Activated naive CD4-positive, alpha-beta T cell treated with anti-CD3 and anti-CD28 coated beads for 36 hours (primary cell): ENCODE measurements at regions of chr9 and their contacts with region 1.

Region 1: DNA sequence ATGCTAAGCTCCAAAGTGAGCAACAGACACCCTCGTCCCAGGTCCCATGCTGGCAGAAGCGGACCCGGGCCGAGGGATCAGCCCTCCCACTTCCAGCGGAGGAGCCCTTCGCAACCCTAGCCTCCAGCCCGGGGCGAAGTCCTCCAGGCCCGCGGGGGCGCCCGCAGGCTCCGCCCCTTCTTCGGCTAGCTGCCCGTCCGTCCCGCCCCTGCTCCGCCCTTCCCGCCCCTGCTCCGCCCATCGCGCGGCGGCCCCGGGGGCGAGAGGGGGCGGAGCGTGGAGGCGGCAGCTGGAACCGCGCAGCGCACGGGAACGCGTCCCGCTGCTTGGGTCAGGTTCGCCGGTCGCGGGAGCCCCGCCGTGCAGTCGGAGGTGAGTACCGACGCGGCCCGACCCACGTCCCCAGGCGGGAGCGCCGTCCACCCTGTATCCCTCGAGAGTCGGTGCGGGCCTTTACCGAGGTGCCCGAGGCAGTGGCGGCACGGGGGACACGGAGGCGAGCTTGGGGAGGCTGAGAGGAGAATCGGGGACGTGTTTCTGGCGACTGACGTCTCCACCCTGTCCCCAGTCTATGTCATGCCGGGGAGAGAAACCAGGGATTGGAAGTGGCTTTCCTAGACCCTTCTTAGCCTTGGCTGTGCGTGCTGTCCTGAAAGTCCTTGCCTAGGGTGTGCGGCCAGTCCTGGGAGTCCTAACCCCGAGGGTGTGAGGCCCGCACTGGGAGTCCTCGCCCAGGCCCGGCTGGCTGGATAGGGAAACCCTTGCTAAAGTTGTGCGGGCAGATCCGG is at the start of gene ACO1:
- DNase-seq: peak; percentile 82
- H3K4me3 Mint-ChIP-seq: peak within 1 kb of the TSS; percentile 79
- H3K27ac Mint-ChIP-seq: no peak within 1 kb of the TSS
- H3K4me1 Mint-ChIP-seq: peaks cover 16% of the 10 kb centered on the region
- H3K27me3 Mint-ChIP-seq: peaks cover 3% of the 10 kb centered on the region
- total RNA-seq, gene ACO1: 13.2 to 14.8 TPM

Region 2: DNA sequence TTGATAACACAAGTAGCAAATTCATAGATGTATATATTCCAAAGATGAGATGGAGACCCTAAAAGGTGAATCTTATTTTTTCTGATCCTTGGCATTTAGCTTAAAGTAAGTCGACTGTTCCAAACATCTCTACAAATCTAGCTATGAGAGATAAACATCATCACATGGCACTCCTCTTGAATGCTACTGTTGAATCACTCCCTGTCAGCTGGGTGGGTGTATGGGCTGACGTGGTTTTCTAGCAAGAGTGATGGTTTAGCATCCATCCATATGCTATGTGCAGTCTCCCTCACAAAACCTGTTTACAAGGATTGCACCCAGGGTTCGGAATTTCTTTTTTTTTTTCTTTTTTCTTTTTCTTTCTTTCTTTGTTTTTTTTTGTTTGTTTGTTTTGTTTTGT is 13.6 kb after region 1 on chr9:
- CTCF ChIA-PET with region 1: interaction called, 10 read pairs
- intact Hi-C with region 1: loop called (anchors 2 kb)
- DNase-seq: no peak
- H3K4me3 Mint-ChIP-seq: no peak overlapping the region
- H3K27ac Mint-ChIP-seq: no peak overlapping the region
- H3K4me1 Mint-ChIP-seq: no peaks in the 10 kb centered on the region
- H3K27me3 Mint-ChIP-seq: no peaks in the 10 kb centered on the region

Region 3: DNA sequence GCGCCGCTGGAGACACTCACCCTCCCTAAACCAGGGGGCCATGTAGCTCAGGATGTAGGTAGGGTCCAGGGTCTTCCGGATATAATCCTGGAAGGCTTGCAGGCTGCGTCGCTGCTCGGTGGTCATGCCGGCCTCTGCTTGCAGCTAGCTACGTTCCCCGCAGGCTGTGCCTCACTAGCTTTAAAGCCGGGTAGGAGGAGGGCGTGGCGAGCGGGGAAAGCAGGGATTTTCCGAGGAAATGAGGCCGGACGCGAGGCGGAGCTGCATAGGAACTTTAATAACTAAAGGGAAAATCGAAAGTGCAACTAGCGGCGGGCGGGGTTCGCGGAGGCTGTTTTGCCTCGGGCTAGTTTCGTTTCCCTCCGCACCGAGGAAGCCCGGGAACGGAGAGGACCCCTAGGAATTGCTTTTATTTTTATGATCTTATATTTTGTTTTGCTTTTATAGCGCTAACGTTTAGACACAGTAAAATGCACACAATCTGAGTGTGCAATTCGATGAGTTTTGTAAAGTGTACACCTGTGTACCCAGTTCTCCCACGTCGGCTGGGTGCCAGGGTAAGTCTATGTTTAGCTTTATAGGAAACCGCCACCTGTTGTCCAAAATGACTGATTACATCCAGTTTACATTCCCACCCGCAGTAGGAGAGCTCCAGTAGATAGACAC is 141.6 kb after region 1 on chr9 and contains the start of gene RIGI:
- CTCF ChIA-PET with region 1: interaction called, 33 read pairs
- intact Hi-C with region 1: loop called (anchors 1 kb)
- DNase-seq: peak; percentile 90
- H3K4me3 Mint-ChIP-seq: peak within 1 kb of the TSS; percentile 77
- H3K27ac Mint-ChIP-seq: peak within 1 kb of the TSS; percentile 84
- H3K4me1 Mint-ChIP-seq: peaks cover 32% of the 10 kb centered on the region
- H3K27me3 Mint-ChIP-seq: no peaks in the 10 kb centered on the region
- total RNA-seq, gene RIGI: 7.5 to 8.4 TPM

Region 4: GRCh38 chr9:32571969-32572899 is 187.7 kb after region 1 on chr9:
- CTCF ChIA-PET with region 1: interaction called, 322 read pairs
- intact Hi-C with region 1: loop called (anchors 1 kb)
- DNase-seq: peak; percentile 88
- H3K4me3 Mint-ChIP-seq: peak overlapping the region; percentile 88
- H3K27ac Mint-ChIP-seq: peak overlapping the region; percentile 92
- H3K4me1 Mint-ChIP-seq: peaks cover 16% of the 10 kb centered on the region
- H3K27me3 Mint-ChIP-seq: no peaks in the 10 kb centered on the region

Region 5: DNA sequence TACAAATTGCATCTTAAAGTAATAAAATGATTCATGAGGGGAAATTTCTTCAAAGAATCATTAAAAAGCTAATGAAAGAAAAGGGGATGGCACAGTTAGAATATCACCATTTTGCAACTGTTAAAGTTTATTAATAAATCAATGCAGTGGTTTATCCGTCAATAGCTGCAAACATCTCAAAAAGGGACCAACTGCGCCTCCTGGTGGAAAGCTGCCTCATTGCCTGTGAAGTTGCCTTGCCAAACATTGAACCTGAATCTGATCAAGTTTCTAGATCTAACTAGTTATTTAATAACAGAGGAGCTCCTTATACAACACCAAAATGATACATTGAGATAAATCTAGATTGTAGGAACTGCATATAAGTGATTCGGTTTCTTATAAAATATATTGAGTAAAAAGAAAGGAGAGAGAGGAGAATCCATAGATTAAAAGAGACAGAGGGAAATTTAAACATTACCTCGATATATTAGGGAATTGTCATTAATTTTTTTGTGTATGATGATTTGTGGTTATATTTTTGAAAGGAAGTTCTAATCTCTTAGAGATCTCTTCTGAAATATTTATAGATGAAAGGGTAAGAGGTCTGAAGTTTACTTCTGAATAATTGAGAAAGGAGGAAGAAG is 195.3 kb after region 1 on chr9:
- CTCF ChIA-PET with region 1: interaction called, 322 read pairs
- intact Hi-C with region 1: loop called (anchors 1 kb)
- DNase-seq: peak; percentile 89
- H3K4me3 Mint-ChIP-seq: no peak overlapping the region
- H3K27ac Mint-ChIP-seq: no peak overlapping the region
- H3K4me1 Mint-ChIP-seq: no peaks in the 10 kb centered on the region
- H3K27me3 Mint-ChIP-seq: peaks cover 13% of the 10 kb centered on the region